ENCODE measurements at regions of chr7 and their contacts with region 1.

Region 1: DNA sequence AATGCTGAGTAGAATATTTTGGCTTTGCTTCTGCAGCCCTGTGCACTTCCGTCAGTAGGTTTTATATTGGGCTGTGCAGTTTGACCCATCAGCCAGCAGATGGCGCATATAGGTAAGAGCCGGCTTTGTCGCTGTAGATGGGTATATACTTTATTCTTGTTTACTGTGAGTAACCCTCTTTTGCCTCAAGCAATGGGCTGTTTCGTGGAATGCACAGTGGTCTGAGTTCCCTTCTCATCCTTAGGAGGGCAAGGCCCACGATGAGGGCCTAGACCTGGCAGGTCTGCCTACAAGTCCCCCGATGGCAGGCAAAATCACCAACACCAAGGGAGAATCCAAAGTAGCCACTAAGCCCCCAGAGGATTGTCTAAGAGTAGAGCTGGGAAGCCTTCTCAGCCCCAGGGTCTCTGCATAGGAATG is 1002.9 kb upstream of the KCND2 start:
- DNase-seq: peak in 1 of 5 donors; percentile 17
- ATAC-seq: peak in 3 of 4 donors; percentile 32 to 48 (median 46)
- H3K4me3 ChIP-seq: no peak overlapping the region
- H3K27ac ChIP-seq: no peak overlapping the region
- H3K4me1 ChIP-seq: no peaks in the 10 kb centered on the region
- H3K27me3 ChIP-seq: peaks cover 0 to 2% (median 0%) of the 10 kb centered on the region in 9 donors
- CTCF ChIP-seq: peak; percentile 17 to 73 (median 56)
- POLR2A ChIP-seq: no peak

Region 2: GRCh38 chr7:120554960-120555571 is 1285.0 kb after region 1 on chr7:
- intact Hi-C with region 1: loop called in 6 of 10 experiments (anchors 10 kb)
- DNase-seq: peak in 2 of 5 donors; percentile 11 to 23
- ATAC-seq: peak in 1 of 4 donors; percentile 49
- H3K4me3 ChIP-seq: no peak overlapping the region
- H3K27ac ChIP-seq: no peak overlapping the region
- H3K4me1 ChIP-seq: no peaks in the 10 kb centered on the region
- H3K27me3 ChIP-seq: peaks cover 0 to 14% (median 0%) of the 10 kb centered on the region in 9 donors
- CTCF ChIP-seq: peak in 11 of 12 donors; percentile 28 to 66 (median 49)
- POLR2A ChIP-seq: no peak

Region 3: GRCh38 chr7:120564145-120564544 is 1294.1 kb after region 1 on chr7:
- intact Hi-C with region 1: loop called in 6 of 10 experiments (anchors 10 kb)
- DNase-seq: no peak
- ATAC-seq: no peak
- H3K4me3 ChIP-seq: no peak overlapping the region
- H3K27ac ChIP-seq: no peak overlapping the region
- H3K4me1 ChIP-seq: no peaks in the 10 kb centered on the region
- H3K27me3 ChIP-seq: peaks cover 0 to 3% (median 0%) of the 10 kb centered on the region in 9 donors
- CTCF ChIP-seq: no peak
- POLR2A ChIP-seq: no peak

Measured in heart left ventricle (tissue), 16 donors.